Heart right ventricle (tissue), 16 donors: ENCODE measurements at regions of chr3 and their contacts with region 1.

Region 1: GRCh38 chr3:97932387-97932801 is 39.8 kb downstream of the RIOX2 start:
- DNase-seq: peak in 1 of 2 donors; percentile 22
- ATAC-seq: peak; percentile 69 to 85 (median 81)
- H3K4me3 ChIP-seq: no peak overlapping the region
- H3K27ac ChIP-seq: peak overlapping the region in 5 of 10 donors; percentile 9 to 36 (median 18)
- H3K4me1 ChIP-seq: peaks cover 0 to 29% (median 3%) of the 10 kb centered on the region in 9 donors
- H3K27me3 ChIP-seq: no peaks in the 10 kb centered on the region
- CTCF ChIP-seq: no peak

Region 2: GRCh38 chr3:97389911-97390310 is 542.5 kb before region 1 on chr3:
- intact Hi-C with region 1: no loop called
- DNase-seq: no peak
- ATAC-seq: no peak
- H3K4me3 ChIP-seq: no peak overlapping the region
- H3K27ac ChIP-seq: no peak overlapping the region
- H3K4me1 ChIP-seq: no peaks in the 10 kb centered on the region
- H3K27me3 ChIP-seq: no peaks in the 10 kb centered on the region
- CTCF ChIP-seq: no peak

Region 3: DNA sequence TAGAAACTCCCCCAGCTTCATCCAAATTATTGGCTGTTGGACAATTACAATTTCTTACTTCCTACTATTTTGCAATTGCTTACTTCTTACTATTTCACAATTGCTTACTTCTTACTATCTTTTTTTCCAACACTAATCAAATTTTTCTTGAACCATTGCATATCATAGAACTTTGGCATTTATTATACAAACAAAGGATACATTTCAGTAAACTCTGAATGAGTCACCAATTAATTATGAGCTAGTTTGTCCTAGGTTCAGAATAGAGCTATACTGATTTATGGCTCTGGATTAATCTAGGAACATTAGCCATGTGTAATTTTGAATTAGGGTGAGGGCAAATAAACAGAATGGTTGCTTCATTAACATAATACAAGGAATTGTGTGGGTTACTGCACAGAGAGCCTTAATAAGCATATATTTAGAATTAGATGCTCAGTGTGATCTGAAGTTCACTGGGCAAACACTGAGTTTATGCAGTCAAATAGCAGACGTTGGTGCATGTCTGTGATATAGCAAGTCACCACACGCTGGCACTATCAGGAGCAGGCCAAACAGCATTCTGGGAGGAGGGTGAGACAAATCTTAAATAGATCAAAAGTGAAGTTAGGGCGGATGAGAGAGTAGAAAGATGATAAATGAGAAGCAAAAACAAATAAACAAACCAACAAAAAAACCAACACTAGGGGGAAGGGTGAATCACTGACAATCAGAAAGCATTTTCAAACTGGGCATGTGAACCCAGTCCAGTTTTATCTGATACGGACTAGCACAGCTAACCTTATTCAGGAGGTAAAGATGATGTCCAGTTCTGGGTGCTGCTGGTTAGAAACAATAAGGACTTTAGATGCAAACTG is 81.2 kb after region 1 on chr3:
- intact Hi-C with region 1: loop called in 1 of 10 experiments (anchors 10 kb)
- DNase-seq: no peak
- ATAC-seq: no peak
- H3K4me3 ChIP-seq: no peak overlapping the region
- H3K27ac ChIP-seq: peak overlapping the region in 1 of 10 donors; percentile 4
- H3K4me1 ChIP-seq: peaks cover 0 to 22% (median 4%) of the 10 kb centered on the region in 9 donors
- H3K27me3 ChIP-seq: no peaks in the 10 kb centered on the region
- CTCF ChIP-seq: no peak